ENCODE measurements at regions of chr3 and their contacts with region 1.

Region 1: GRCh38 chr3:78872195-78872594 is 895.6 kb downstream of the ROBO1 start:
- DNase-seq: no peak
- ATAC-seq: peak; percentile 20; the same call in 2 of the 3 replicates
- H3K4me3 ChIP-seq: no peak overlapping the region
- H3K27ac ChIP-seq: 0 out of 2 replicates have a peak overlapping the region, but pooled peaks have one; percentile 4
- H3K4me1 ChIP-seq: no peaks in the 10 kb centered on the region
- H3K27me3 ChIP-seq: no peaks in the 10 kb centered on the region
- CTCF ChIP-seq: no peak
- EP300 ChIP-seq: no peak; a peak in 1 of 4 replicates
- POLR2A ChIP-seq: no peak
- RAD21 ChIP-seq: no peak

Region 2: GRCh38 chr3:78846718-78847117 is 25.5 kb before region 1 on chr3:
- CTCF ChIA-PET with region 1: no interaction called
- POLR2A ChIA-PET with region 1: no interaction called
- RAD21 ChIA-PET with region 1: interaction called, 7 read pairs
- SMC1A ChIA-PET with region 1: interaction called, 18 read pairs
- in situ Hi-C with region 1: no loop called
- intact Hi-C with region 1: no loop called
- DNase-seq: no peak
- ATAC-seq: no peak
- H3K4me3 ChIP-seq: no peak overlapping the region
- H3K27ac ChIP-seq: no peak overlapping the region
- H3K4me1 ChIP-seq: no peaks in the 10 kb centered on the region
- H3K27me3 ChIP-seq: no peaks in the 10 kb centered on the region
- CTCF ChIP-seq: no peak
- EP300 ChIP-seq: no peak
- POLR2A ChIP-seq: no peak
- RAD21 ChIP-seq: no peak

Region 3: GRCh38 chr3:78857494-78858111 is 14.6 kb before region 1 on chr3:
- CTCF ChIA-PET with region 1: interaction called, 9 read pairs
- POLR2A ChIA-PET with region 1: interaction called, 11 read pairs
- RAD21 ChIA-PET with region 1: interaction called, 31 read pairs
- SMC1A ChIA-PET with region 1: interaction called, 33 read pairs
- in situ Hi-C with region 1: no loop called
- intact Hi-C with region 1: no loop called
- DNase-seq: no peak
- ATAC-seq: peak; percentile 36; the same call in 1 of the 3 replicates
- H3K4me3 ChIP-seq: no peak overlapping the region
- H3K27ac ChIP-seq: no peak overlapping the region
- H3K4me1 ChIP-seq: no peaks in the 10 kb centered on the region
- H3K27me3 ChIP-seq: no peaks in the 10 kb centered on the region
- CTCF ChIP-seq: peak in 1 of 3 experiments; percentile 28; a peak in 2 of 6 replicates
- EP300 ChIP-seq: no peak
- POLR2A ChIP-seq: no peak
- RAD21 ChIP-seq: peak; percentile 28; the same call in 1 of the 2 replicates

Region 4: GRCh38 chr3:78887547-78888011 is 15.4 kb after region 1 on chr3:
- CTCF ChIA-PET with region 1: interaction called, 3 read pairs
- POLR2A ChIA-PET with region 1: interaction called, 6 read pairs
- RAD21 ChIA-PET with region 1: interaction called, 18 read pairs
- SMC1A ChIA-PET with region 1: interaction called, 20 read pairs
- in situ Hi-C with region 1: no loop called
- intact Hi-C with region 1: no loop called
- DNase-seq: peak; percentile 34
- ATAC-seq: peak; percentile 48
- H3K4me3 ChIP-seq: no peak overlapping the region
- H3K27ac ChIP-seq: no peak overlapping the region
- H3K4me1 ChIP-seq: no peaks in the 10 kb centered on the region
- H3K27me3 ChIP-seq: no peaks in the 10 kb centered on the region
- CTCF ChIP-seq: no peak
- EP300 ChIP-seq: no peak
- POLR2A ChIP-seq: no peak
- RAD21 ChIP-seq: no peak

Region 5: DNA sequence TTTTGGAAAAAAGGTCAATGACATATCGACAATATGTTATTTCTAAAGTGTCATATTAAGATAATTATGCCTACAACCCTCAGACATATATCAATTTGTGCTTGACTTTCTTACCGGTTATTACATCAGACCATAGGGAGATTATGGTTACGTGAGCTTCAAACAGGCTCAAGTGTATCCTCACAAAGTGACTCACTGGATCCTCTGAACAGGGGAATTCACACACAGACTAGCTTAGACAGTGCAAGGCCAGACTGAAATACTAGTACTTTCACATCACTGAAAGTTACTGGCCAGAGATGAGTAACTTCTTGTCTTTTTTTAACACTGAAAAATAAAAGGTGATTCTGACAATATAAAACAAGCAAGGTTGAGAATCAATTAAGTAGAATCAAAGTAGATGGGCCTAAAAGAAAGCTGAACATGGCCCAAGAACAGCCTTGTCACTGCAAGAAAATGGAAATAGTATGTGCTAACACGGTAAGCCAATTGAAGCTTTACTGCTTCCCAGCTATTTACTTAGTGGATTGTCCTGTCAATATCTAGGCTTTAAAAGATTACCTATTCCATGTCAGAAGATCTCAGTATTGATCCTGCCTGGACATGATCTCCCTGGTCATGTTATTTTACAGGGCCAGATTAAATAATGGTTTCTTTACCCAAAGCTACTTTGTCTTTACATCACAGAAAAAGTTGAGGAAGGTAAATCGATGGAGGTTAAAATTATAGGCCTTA is 47.0 kb after region 1 on chr3:
- CTCF ChIA-PET with region 1: no interaction called
- POLR2A ChIA-PET with region 1: interaction called, 7 read pairs
- RAD21 ChIA-PET with region 1: interaction called, 16 read pairs
- SMC1A ChIA-PET with region 1: interaction called, 32 read pairs
- in situ Hi-C with region 1: no loop called
- intact Hi-C with region 1: no loop called
- DNase-seq: peak; percentile 71
- ATAC-seq: peak; percentile 95
- H3K4me3 ChIP-seq: no peak overlapping the region
- H3K27ac ChIP-seq: peak overlapping the region; percentile 13; the same call in 1 of the 2 replicates
- H3K4me1 ChIP-seq: no peaks in the 10 kb centered on the region
- H3K27me3 ChIP-seq: no peaks in the 10 kb centered on the region
- CTCF ChIP-seq: no peak
- EP300 ChIP-seq: peak in 1 of 2 experiments; percentile 12; a peak in 1 of 4 replicates
- POLR2A ChIP-seq: no peak
- RAD21 ChIP-seq: no peak

Measured in GM12878 (cell line).